B cell (primary cell): ENCODE measurements at regions of chr2 and their contacts with region 1.

Region 1: DNA sequence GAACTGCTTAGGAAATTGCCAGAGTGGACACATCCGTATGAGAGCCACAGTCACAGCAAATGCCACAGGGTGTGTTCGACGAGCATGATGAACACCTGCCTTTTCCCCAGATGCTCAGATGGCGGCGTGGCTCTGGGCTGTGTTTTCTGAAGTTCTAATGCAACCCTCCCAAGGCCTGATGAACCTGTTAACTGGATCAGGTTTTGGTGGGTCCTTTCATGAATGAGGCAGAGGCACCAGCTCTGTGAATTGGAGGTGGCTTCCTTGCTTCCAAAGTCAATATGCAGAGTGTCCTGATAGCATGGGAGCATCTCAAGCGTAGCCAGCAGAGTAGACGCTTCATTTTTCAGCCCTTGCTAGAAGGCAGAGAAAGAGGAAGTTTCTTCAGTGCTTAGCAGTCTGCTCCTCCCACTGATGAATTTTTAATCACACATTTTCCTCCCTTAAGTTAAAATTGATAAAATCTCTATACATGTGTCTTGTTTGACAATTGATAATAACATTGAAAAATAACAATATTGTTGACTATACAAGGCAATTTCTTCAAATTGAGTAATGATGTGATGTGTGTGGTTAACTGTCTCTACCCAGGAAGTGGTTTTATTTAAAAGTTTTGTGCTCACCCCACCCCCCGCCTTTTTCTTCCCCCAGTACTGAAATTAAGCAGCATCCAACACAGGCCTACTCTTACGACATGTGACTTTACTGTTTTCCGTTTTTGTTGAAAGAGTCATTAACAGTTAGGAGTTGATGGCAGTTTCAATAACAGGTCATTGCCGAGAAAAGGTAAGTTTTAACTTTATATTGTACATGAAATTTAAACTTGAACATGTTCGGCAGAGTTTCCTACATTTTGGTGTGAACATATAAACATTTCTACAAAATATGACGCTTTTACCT is at the start of gene ARHGAP15:
- DNase-seq: peak; percentile 90
- ATAC-seq: peak; percentile 92
- H3K4me3 ChIP-seq: peak within 1 kb of the TSS; percentile 44 to 93 (median 57)
- H3K4me3 Mint-ChIP-seq: peak within 1 kb of the TSS; percentile 78
- H3K27ac ChIP-seq: peak within 1 kb of the TSS; percentile 92
- H3K27ac Mint-ChIP-seq: peak within 1 kb of the TSS; percentile 99
- H3K4me1 ChIP-seq: peaks cover 46 to 51% of the 10 kb centered on the region in 2 donors
- H3K4me1 Mint-ChIP-seq: peaks cover 52% of the 10 kb centered on the region
- H3K27me3 ChIP-seq: no peaks in the 10 kb centered on the region
- H3K27me3 Mint-ChIP-seq: no peaks in the 10 kb centered on the region
- CTCF ChIP-seq: no peak
- total RNA-seq, gene ARHGAP15: 187 and 198 TPM in 2 replicates

Region 2: GRCh38 chr2:142868281-142868762 is 260.6 kb before region 1 on chr2:
- CTCF ChIA-PET with region 1: no interaction called
- POLR2A ChIA-PET with region 1: no interaction called
- intact Hi-C with region 1: loop called (anchors 5 kb)
- DNase-seq: peak; percentile 53
- ATAC-seq: peak; percentile 12
- H3K4me3 ChIP-seq: peak overlapping the region in 3 of 5 experiments; percentile 1 to 6 (median 2)
- H3K4me3 Mint-ChIP-seq: peak overlapping the region; percentile 65
- H3K27ac ChIP-seq: peak overlapping the region; percentile 62 to 82
- H3K27ac Mint-ChIP-seq: peak overlapping the region; percentile 84
- H3K4me1 ChIP-seq: peaks cover 26 to 42% of the 10 kb centered on the region in 2 donors
- H3K4me1 Mint-ChIP-seq: peaks cover 45% of the 10 kb centered on the region
- H3K27me3 ChIP-seq: no peaks in the 10 kb centered on the region
- H3K27me3 Mint-ChIP-seq: no peaks in the 10 kb centered on the region
- CTCF ChIP-seq: no peak

Region 3: GRCh38 chr2:143140864-143141661 is 12.1 kb after region 1 on chr2:
- CTCF ChIA-PET with region 1: interaction called, 47 read pairs
- POLR2A ChIA-PET with region 1: interaction called, 23 read pairs
- intact Hi-C with region 1: loop called (anchors 1 kb)
- DNase-seq: peak; percentile 75
- ATAC-seq: peak; percentile 90
- H3K4me3 ChIP-seq: peak overlapping the region in 4 of 5 experiments; percentile 1 to 54 (median 6)
- H3K4me3 Mint-ChIP-seq: peak overlapping the region; percentile 63
- H3K27ac ChIP-seq: peak overlapping the region; percentile 58 to 80
- H3K27ac Mint-ChIP-seq: peak overlapping the region; percentile 88
- H3K4me1 ChIP-seq: peaks cover 59 to 81% of the 10 kb centered on the region in 2 donors
- H3K4me1 Mint-ChIP-seq: peaks cover 88% of the 10 kb centered on the region
- H3K27me3 ChIP-seq: no peaks in the 10 kb centered on the region
- H3K27me3 Mint-ChIP-seq: no peaks in the 10 kb centered on the region
- CTCF ChIP-seq: no peak

Region 4: GRCh38 chr2:143150287-143150686 is 21.4 kb after region 1 on chr2:
- CTCF ChIA-PET with region 1: interaction called, 130 read pairs
- POLR2A ChIA-PET with region 1: no interaction called
- intact Hi-C with region 1: loop called (anchors 1 kb)
- DNase-seq: peak; percentile 79
- ATAC-seq: peak; percentile 82
- H3K4me3 ChIP-seq: peak overlapping the region in 3 of 5 experiments; percentile 12 to 34 (median 25)
- H3K4me3 Mint-ChIP-seq: peak overlapping the region; percentile 68
- H3K27ac ChIP-seq: peak overlapping the region; percentile 62 to 78
- H3K27ac Mint-ChIP-seq: peak overlapping the region; percentile 92
- H3K4me1 ChIP-seq: peaks cover 82 to 91% of the 10 kb centered on the region in 2 donors
- H3K4me1 Mint-ChIP-seq: peaks cover 85% of the 10 kb centered on the region
- H3K27me3 ChIP-seq: no peaks in the 10 kb centered on the region
- H3K27me3 Mint-ChIP-seq: no peaks in the 10 kb centered on the region
- CTCF ChIP-seq: no peak

Region 5: GRCh38 chr2:143177096-143177786 is 48.3 kb after region 1 on chr2:
- CTCF ChIA-PET with region 1: interaction called, 3 read pairs
- POLR2A ChIA-PET with region 1: no interaction called
- intact Hi-C with region 1: loop called (anchors 1 kb)
- DNase-seq: peak; percentile 74
- ATAC-seq: peak; percentile 95
- H3K4me3 ChIP-seq: peak overlapping the region in 3 of 5 experiments; percentile 29 to 57 (median 38)
- H3K4me3 Mint-ChIP-seq: peak overlapping the region; percentile 87
- H3K27ac ChIP-seq: peak overlapping the region; percentile 88 to 90
- H3K27ac Mint-ChIP-seq: peak overlapping the region; percentile 96
- H3K4me1 ChIP-seq: peaks cover 34 to 38% of the 10 kb centered on the region in 2 donors
- H3K4me1 Mint-ChIP-seq: peaks cover 61% of the 10 kb centered on the region
- H3K27me3 ChIP-seq: no peaks in the 10 kb centered on the region
- H3K27me3 Mint-ChIP-seq: no peaks in the 10 kb centered on the region
- CTCF ChIP-seq: no peak

Region 6: GRCh38 chr2:143422681-143423080 is 293.8 kb after region 1 on chr2:
- CTCF ChIA-PET with region 1: no interaction called
- POLR2A ChIA-PET with region 1: no interaction called
- intact Hi-C with region 1: no loop called
- DNase-seq: peak; percentile 36
- ATAC-seq: peak; percentile 51
- H3K4me3 ChIP-seq: no peak overlapping the region
- H3K4me3 Mint-ChIP-seq: no peak overlapping the region
- H3K27ac ChIP-seq: no peak overlapping the region
- H3K27ac Mint-ChIP-seq: no peak overlapping the region
- H3K4me1 ChIP-seq: peaks cover 0 to 17% of the 10 kb centered on the region in 2 donors
- H3K4me1 Mint-ChIP-seq: peaks cover 36% of the 10 kb centered on the region
- H3K27me3 ChIP-seq: no peaks in the 10 kb centered on the region
- H3K27me3 Mint-ChIP-seq: no peaks in the 10 kb centered on the region
- CTCF ChIP-seq: no peak